Dendritic cell treated with granulocyte-macrophage colony-stimulating factor and Interleukin-4, amounts not matched to agents 40 ng/mL and 50 ng/mL, for 4 days (primary cell): ENCODE measurements at regions of chr2 and their contacts with region 1.

Region 1: GRCh38 chr2:9630749-9631483 is at the start of gene YWHAQ:
- H3K4me3 Mint-ChIP-seq: peak within 1 kb of the TSS; percentile 99
- H3K27ac Mint-ChIP-seq: peak within 1 kb of the TSS; percentile 91
- H3K4me1 Mint-ChIP-seq: peaks cover 52% of the 10 kb centered on the region
- H3K27me3 Mint-ChIP-seq: peaks cover 10% of the 10 kb centered on the region

Region 2: DNA sequence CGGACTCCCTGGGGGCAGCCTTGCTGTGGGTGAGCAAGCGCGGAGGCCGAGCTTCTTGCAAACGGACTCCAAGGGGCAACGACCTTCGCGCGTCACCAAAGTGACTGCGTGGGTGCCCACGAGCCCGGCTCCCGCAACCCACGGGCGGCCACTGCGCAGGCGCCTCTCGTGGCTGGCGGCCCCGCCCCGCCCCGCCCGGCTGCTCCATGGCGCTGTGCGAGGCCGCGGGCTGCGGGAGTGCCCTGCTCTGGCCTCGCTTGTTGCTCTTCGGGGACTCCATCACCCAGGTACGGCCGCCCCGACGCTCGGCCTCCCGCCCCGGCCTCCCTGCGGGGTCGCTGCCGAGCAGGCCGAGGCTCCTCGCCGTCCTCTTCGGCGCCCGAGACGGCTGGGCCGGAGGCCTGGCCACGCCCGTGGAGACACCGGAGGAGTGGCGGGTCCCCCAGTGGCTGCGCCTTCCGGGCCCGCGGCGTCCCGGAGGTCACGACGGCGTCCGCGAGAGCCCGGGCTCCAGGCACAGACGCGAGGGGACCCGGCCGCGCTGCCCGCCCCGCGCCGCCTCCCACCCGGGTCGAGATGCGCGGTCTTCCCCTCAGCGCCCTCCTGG is 156.5 kb before region 1 on chr2 and contains the start of gene IAH1:
- intact Hi-C with region 1: loop called (anchors 5 kb)
- H3K4me3 Mint-ChIP-seq: peak within 1 kb of the TSS; percentile 82
- H3K27ac Mint-ChIP-seq: peak within 1 kb of the TSS; percentile 91
- H3K4me1 Mint-ChIP-seq: peaks cover 33% of the 10 kb centered on the region
- H3K27me3 Mint-ChIP-seq: no peaks in the 10 kb centered on the region

Region 3: GRCh38 chr2:9545502-9545901 is 85.4 kb before region 1 on chr2:
- intact Hi-C with region 1: no loop called
- H3K4me3 Mint-ChIP-seq: no peak overlapping the region
- H3K27ac Mint-ChIP-seq: no peak overlapping the region
- H3K4me1 Mint-ChIP-seq: peaks cover 66% of the 10 kb centered on the region
- H3K27me3 Mint-ChIP-seq: no peaks in the 10 kb centered on the region

Region 4: DNA sequence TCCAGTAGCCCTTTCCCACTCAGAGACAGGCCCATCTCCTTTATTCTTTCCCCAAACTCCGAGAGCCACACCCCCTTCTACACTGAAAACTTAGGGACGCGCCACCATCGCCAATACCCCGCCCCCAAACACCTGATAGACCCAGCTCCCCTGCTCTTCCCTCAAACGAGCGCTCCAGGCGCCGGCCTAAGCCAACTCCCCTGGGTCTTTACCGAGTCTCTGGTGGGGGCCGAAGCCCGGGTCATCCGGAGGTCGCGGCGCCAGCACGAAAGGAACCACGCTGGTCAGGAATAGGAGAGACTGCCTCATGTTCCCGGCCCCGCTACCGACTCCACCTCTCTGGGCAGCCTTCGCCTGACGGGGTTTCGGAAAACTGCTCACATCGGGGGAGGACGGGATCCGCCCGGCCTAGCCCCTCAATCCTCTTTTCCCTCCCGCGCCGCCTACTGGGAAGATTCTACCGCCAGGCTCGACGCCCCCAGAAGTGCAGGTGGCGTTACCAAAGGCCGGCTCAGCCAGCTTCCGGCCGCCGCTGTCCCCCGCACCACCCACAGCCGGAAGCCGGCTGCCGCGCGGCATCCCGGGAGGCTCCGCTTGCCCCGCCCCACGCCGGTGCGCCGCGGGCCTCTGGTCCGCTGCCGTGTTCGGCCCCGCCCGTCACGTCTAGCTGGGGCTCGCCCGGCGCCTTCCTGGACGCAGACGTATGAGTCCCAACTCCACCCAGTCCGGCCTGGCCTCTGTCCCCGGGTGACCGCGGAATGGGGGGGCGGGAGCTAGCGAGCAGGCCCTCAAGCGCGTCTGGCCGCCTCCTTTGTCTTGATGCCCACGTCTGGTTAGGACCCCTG is 75.4 kb before region 1 on chr2 and contains the start of gene ADAM17:
- intact Hi-C with region 1: loop called (anchors 5 kb)
- H3K4me3 Mint-ChIP-seq: peak within 1 kb of the TSS; percentile 95
- H3K27ac Mint-ChIP-seq: peak within 1 kb of the TSS; percentile 95
- H3K4me1 Mint-ChIP-seq: peaks cover 32% of the 10 kb centered on the region
- H3K27me3 Mint-ChIP-seq: no peaks in the 10 kb centered on the region

Region 5: DNA sequence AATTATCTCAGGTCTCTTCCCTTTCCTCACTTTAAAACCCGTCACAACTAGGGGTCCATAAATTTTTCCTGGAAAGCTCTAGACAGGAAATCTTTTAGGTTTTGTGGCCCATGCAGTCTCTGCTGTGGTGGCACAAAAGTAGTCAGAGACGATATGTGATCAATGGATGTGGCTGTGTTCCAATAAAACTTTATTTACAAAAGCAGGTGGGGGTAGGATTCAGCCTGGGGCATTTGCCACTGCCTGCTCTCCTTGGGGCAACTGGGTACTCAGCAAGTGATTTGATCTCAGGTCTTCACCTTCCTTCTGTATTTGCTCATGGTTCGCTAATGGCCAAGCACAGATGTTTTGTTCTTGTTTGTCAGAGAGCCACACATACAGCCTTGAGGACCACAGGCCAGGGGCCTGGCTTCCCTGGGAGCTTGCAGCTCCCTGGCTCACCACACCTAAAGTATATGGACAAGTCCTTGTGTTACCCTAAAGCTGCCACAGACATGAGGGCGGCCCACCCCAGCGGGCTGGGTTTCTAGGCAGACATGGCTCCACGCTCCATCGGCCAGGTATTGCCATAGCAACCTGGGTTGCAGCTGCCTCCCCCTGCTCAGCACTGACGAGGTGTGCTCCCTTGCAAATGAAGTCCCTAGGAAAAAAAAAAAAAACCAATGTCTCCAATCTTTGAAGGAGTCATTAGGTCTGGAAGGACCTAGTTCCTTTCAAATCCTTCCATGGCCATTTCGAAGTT is 89.6 kb after region 1 on chr2:
- intact Hi-C with region 1: no loop called
- H3K4me3 Mint-ChIP-seq: no peak overlapping the region
- H3K27ac Mint-ChIP-seq: no peak overlapping the region
- H3K4me1 Mint-ChIP-seq: peaks cover 2% of the 10 kb centered on the region
- H3K27me3 Mint-ChIP-seq: no peaks in the 10 kb centered on the region

Region 6: DNA sequence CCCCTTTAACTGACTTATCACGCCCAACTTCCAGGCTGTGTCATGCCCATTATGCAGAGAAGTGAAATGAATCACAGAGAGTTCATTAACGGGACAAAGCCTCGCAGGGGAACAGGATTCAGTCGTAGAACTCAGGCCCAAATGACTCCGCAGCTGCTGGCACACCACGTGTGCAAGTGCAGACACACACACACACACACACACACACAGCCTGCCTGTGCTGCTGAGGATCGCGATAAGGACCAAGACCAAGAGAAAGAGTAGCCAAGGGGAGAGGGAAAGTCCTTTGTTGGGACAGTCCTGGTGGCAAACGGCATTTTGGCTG is 122.3 kb after region 1 on chr2:
- intact Hi-C with region 1: loop called (anchors 5 kb)
- H3K4me3 Mint-ChIP-seq: peak overlapping the region; percentile 53
- H3K27ac Mint-ChIP-seq: peak overlapping the region; percentile 83
- H3K4me1 Mint-ChIP-seq: peaks cover 64% of the 10 kb centered on the region
- H3K27me3 Mint-ChIP-seq: peaks cover 62% of the 10 kb centered on the region